AG04449 (cell line): ENCODE measurements at regions of chr6 and their contacts with region 1.

Region 1: GRCh38 chr6:119147101-119148053 is 68.9 kb upstream of the FAM184A start:
- DNase-seq: peak; percentile 82
- H3K4me3 ChIP-seq: no peak overlapping the region
- CTCF ChIP-seq: no peak

Region 2: GRCh38 chr6:118945217-118945616 is 202.2 kb before region 1 on chr6:
- CTCF ChIA-PET with region 1: no interaction called
- POLR2A ChIA-PET with region 1: no interaction called
- DNase-seq: no peak
- H3K4me3 ChIP-seq: no peak overlapping the region
- CTCF ChIP-seq: no peak

Region 3: GRCh38 chr6:119078376-119079282 is 68.7 kb before region 1 on chr6 and contains the start of gene FAM184A:
- CTCF ChIA-PET with region 1: no interaction called
- POLR2A ChIA-PET with region 1: no interaction called
- DNase-seq: no peak
- H3K4me3 ChIP-seq: peak within 1 kb of the TSS; percentile 56
- CTCF ChIP-seq: no peak

Region 4: DNA sequence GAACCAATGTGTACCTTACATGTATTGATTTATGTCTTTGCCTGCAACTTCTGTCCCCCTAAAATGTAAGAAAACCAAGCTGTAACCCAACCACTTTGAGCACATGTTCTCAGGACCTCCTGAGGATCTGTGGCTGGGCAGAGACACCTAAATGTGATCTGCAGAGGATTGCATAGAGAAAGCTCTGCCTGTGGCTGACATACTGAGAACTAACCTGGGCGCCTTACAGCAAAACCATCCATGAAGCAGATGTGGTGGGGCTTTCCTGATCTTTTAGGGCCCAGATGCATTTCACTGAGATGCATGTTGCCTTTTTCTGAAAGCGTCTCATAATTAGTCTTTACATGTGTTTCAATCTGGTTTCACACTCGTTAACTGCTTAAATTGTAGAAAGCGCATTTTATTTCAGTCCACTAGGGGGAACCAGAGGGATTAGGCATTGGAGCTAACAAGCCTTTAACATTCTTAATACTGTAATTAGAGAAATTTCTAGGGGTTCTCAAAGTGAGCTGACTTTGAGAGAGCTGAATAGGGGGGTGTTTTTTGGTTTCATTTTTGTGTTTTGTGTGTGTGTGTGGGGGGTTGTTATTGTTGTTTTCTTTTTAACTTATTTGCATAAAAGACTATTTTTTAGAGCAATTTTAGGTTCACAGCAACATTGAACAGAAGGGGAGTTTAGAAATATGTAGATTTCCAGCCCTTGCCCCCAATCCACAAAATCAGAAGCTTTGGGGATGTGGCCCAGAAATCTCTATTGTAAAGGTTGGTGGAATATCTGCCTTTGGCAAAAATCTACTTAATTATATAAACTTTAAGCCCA is 18.0 kb before region 1 on chr6:
- CTCF ChIA-PET with region 1: interaction called, 15 read pairs
- POLR2A ChIA-PET with region 1: no interaction called
- DNase-seq: no peak
- H3K4me3 ChIP-seq: no peak overlapping the region
- CTCF ChIP-seq: peak; percentile 60

Region 5: GRCh38 chr6:119186490-119186889 is 39.1 kb after region 1 on chr6:
- CTCF ChIA-PET with region 1: interaction called, 10 read pairs
- POLR2A ChIA-PET with region 1: no interaction called
- DNase-seq: no peak
- H3K4me3 ChIP-seq: no peak overlapping the region
- CTCF ChIP-seq: no peak

Region 6: DNA sequence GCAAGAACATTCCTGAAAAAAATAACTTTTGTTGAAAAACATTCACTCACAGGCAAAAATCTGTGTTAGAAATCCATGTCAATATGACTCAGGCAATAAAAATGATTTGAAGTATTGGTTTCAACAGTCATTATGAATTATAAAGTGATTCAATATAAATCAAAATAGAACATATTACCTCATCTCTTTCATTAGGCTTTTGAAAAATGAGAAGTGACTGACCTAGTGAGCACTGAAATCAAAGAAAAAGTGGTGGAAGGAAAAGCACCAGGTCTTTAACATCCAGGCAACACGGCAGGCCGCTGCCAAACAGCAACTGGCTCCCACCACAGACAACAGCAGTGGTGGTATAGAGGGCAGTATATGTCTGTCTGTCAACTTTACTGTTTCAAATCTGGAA is 133.3 kb after region 1 on chr6:
- CTCF ChIA-PET with region 1: no interaction called
- POLR2A ChIA-PET with region 1: no interaction called
- DNase-seq: no peak
- H3K4me3 ChIP-seq: no peak overlapping the region
- CTCF ChIP-seq: no peak

Region 7: GRCh38 chr6:119343167-119343566 is 195.8 kb after region 1 on chr6:
- CTCF ChIA-PET with region 1: interaction called, 40 read pairs
- POLR2A ChIA-PET with region 1: no interaction called
- DNase-seq: no peak
- H3K4me3 ChIP-seq: no peak overlapping the region
- CTCF ChIP-seq: no peak

Region 8: DNA sequence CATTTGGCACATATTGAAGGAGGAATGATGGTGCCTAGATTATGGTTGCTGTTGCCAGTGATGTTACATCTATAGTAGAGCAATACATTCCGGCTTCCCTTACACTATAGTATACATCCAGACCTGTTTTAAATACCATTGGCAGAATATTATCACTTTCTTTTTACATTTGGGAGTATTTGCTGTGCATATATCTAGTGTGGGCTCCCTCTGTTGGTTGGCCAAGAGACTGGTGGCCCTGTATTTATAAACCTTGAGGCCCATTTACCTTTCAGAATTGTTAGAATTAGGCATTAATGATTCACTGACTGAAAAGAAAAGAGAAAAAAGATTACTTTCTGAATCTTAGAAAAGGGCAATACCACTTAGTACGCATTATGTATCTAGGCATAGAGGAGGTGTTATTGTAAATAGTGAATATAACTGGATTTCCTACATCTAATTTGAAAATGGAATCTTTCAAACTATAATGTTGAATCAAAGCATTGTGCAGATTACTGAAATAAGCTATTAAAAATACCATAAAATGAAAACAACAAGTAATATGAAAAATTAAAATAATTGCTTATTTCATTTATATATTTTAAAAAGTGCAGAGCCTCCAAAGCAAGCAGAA is 831.0 kb after region 1 on chr6:
- CTCF ChIA-PET with region 1: interaction called, 55 read pairs
- POLR2A ChIA-PET with region 1: no interaction called
- DNase-seq: no peak
- H3K4me3 ChIP-seq: no peak overlapping the region
- CTCF ChIP-seq: peak; percentile 49